ENCODE measurements at regions of chr1 and their contacts with region 1.

Region 1: DNA sequence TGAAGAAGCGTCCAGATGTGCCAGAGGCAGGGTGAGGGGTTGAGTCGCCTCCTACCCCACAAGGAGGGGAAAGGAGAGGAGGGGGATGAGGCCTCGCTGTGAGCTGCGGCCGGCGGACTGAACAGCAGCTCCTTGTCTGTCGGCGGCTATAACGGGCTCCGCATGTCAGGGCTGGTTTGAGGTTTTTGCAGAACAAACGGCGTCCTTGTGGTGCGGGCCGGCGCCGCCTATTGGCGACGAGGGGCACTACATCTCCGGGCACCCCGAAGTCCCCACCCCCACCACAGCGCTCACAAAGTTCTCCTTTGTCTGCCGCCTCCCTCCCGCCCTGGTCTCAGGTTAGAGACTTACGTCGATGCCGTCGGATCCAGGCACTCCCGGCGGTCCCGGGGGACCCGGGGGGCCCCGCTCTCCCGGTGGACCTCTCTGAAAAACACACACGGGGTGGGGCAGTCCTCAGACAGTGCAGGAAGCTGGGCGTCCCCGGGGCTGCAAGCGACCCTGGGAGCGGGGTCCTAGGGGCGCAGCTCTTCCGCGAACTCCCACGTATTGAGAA is 1.8 kb downstream of the COL9A2 start:
- DNase-seq: peak; percentile 88
- CTCF ChIP-seq: peak; percentile 90

Region 2: GRCh38 chr1:40078512-40079333 is 236.6 kb before region 1 on chr1:
- CTCF ChIA-PET with region 1: interaction called, 10 read pairs
- POLR2A ChIA-PET with region 1: no interaction called
- DNase-seq: peak; percentile 69
- CTCF ChIP-seq: peak; percentile 70

Region 3: GRCh38 chr1:40241362-40241761 is 74.0 kb before region 1 on chr1:
- CTCF ChIA-PET with region 1: interaction called, 12 read pairs
- POLR2A ChIA-PET with region 1: no interaction called
- DNase-seq: no peak
- CTCF ChIP-seq: no peak

Region 4: DNA sequence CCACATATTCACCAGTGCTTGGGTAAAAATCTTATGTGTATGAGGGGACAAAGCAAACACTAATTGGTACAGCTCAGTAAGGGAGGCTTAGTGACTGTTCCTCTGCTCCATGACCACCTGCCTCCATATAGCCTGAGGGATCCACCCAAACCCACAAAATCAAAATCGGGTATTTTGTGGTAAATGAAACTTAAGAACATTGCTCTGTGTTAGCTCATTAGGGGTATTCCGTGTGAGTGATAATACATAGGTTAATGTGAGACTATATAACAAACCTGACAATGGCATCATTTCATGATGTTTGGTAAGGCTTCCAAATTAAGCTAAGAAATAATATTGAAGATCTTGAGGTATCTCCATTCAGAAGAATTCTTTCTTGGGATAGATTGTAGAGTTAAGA is 24.0 kb before region 1 on chr1:
- CTCF ChIA-PET with region 1: interaction called, 13 read pairs
- POLR2A ChIA-PET with region 1: no interaction called
- DNase-seq: no peak
- CTCF ChIP-seq: no peak

Region 5: DNA sequence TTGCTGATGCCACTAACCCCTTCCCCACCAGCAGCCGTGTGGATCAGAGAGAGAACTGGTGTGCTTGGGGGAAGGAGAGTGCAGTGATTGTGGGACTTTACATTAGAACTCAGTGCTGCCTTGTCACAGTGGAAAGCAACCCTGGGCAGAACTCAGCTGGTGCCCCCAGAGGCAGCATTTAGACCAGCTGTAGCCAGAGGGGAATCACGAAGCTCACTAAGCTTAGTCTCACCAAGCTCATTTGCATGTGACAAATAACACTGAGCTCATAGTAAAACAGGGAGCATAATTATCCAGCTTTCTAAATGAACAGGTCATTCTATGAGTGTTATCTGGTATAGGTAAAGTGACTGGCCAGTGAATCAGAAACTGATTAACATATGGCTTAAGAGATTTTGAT is 48.4 kb after region 1 on chr1:
- CTCF ChIA-PET with region 1: interaction called, 11 read pairs
- POLR2A ChIA-PET with region 1: no interaction called
- DNase-seq: peak; percentile 48
- CTCF ChIP-seq: peak; percentile 25

Region 6: DNA sequence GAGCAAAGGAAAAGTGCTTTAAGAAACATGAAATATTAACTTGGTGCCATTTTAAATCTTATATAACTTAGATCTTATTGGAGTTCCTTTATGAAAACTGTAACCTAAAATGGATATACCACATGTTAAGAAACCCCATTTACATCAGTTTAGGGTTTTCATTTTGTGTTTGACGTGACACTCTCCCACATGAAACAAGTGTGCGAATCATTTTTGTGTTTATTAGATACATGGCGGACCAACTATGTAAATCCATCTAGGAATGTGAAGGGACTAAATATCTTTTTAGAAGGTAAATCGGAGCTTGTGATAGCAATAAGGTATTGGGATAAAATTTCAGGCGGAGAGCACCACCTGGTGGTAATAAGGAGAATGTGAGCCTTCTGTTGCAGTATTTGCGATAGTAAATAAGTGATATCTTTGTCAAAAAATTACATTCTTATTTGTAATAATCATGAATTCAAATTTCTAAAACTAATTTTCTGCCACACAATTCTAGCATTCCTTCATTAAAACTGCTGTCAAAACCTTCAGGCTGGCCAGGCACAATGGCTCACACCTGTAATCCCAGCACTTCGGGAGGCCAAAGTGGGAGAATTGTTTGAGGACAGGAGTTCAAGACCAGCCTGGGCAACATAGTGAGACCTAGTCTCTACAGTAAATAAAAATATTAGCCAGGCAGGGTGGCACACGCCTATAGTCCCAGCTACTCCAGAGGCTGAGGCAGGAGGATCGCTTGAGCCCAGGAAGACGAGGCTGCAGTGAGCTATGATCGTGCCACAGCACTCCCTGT is 89.5 kb after region 1 on chr1:
- CTCF ChIA-PET with region 1: interaction called, 47 read pairs
- POLR2A ChIA-PET with region 1: no interaction called
- DNase-seq: no peak
- CTCF ChIP-seq: peak; percentile 69

Measured in GM10248 (cell line).